Upper lobe of right lung (tissue), 1 donor: ENCODE measurements at regions of chr7 and their contacts with region 1.

Region 1: DNA sequence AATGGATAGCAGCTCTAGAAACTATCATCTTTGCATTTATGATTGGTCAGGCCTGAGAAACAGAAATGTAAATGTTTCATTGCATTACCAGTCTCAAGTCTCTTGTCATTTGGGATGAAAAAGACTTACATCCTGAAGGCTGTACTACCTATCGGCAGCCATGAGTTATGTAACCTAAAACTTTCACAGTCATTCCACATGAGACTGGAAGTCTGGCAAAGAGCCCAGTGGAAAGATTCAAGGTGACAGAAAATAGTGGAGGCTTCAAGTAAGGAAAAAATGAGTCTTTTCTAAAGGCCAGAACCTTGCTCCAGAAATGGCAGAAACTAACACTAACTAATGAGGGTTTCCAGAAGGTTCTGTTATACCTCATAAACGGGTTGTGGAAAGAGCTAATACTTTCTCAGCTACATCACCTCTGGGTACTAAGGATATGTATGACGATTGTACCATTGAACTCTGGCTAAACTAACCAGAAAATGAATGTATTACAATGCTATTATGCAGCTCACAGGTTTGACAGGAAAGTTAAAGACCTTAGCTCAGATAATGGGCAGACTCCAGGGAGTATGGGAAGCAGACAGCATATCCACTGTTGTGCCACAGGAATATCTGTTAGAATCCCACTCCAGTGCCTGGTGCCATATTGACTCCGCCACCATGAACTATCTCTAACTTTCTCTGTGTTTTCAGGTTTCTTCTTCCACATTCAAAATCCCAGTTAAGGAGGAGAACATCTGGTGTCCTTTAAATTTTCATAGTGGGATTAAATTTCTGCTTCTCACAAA is 41.7 kb upstream of the DYNC1I1 start:
- DNase-seq: no peak
- ATAC-seq: no peak
- H3K4me3 ChIP-seq: no peak overlapping the region
- H3K27ac ChIP-seq: no peak overlapping the region
- H3K4me1 ChIP-seq: no peaks in the 10 kb centered on the region
- H3K27me3 ChIP-seq: no peaks in the 10 kb centered on the region
- CTCF ChIP-seq: no peak

Region 2: GRCh38 chr7:95622001-95622549 is 108.6 kb before region 1 on chr7:
- intact Hi-C with region 1: no loop called
- DNase-seq: no peak
- ATAC-seq: no peak
- H3K4me3 ChIP-seq: no peak overlapping the region
- H3K27ac ChIP-seq: no peak overlapping the region
- H3K4me1 ChIP-seq: no peaks in the 10 kb centered on the region
- H3K27me3 ChIP-seq: no peaks in the 10 kb centered on the region
- CTCF ChIP-seq: no peak

Region 3: GRCh38 chr7:95871078-95871782 is 140.5 kb after region 1 on chr7:
- intact Hi-C with region 1: loop called (anchors 10 kb)
- DNase-seq: no peak
- ATAC-seq: peak; percentile 74
- H3K4me3 ChIP-seq: no peak overlapping the region
- H3K27ac ChIP-seq: no peak overlapping the region
- H3K4me1 ChIP-seq: no peaks in the 10 kb centered on the region
- H3K27me3 ChIP-seq: no peaks in the 10 kb centered on the region
- CTCF ChIP-seq: peak; percentile 63